Calu3 (cell line): ENCODE measurements at regions of chr12 and their contacts with region 1.

Region 1: GRCh38 chr12:39272871-39273770 is 169.8 kb downstream of the KIF21A start:
- DNase-seq: peak; percentile 52
- H3K4me3 Mint-ChIP-seq: no peak overlapping the region
- H3K27ac Mint-ChIP-seq: no peak overlapping the region
- H3K4me1 Mint-ChIP-seq: no peaks in the 10 kb centered on the region
- H3K27me3 Mint-ChIP-seq: no peaks in the 10 kb centered on the region
- CTCF ChIP-seq: no peak

Region 2: DNA sequence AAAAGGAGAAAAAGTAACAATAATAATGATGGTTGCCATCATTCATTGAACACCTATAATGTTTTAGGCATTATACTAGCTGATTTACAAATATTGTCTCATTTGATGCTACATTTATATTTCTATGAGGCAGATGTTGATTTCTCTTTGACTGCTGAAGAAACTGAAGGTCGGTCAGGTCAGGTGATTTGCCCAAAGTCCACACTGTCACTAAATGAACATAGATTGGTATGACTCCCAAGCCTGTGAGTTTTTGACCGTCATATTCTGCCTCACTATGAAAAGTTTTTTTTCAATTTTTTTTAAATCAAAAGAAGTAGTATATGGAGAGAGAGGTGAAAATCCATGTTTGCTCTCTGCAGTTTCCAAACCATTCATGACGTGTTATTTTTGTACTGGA is 945.8 kb before region 1 on chr12:
- CTCF ChIA-PET with region 1: interaction called, 3 read pairs
- intact Hi-C with region 1: loop called (anchors 2 kb)
- DNase-seq: no peak
- H3K4me3 Mint-ChIP-seq: no peak overlapping the region
- H3K27ac Mint-ChIP-seq: no peak overlapping the region
- H3K4me1 Mint-ChIP-seq: no peaks in the 10 kb centered on the region
- H3K27me3 Mint-ChIP-seq: no peaks in the 10 kb centered on the region
- CTCF ChIP-seq: no peak

Region 3: DNA sequence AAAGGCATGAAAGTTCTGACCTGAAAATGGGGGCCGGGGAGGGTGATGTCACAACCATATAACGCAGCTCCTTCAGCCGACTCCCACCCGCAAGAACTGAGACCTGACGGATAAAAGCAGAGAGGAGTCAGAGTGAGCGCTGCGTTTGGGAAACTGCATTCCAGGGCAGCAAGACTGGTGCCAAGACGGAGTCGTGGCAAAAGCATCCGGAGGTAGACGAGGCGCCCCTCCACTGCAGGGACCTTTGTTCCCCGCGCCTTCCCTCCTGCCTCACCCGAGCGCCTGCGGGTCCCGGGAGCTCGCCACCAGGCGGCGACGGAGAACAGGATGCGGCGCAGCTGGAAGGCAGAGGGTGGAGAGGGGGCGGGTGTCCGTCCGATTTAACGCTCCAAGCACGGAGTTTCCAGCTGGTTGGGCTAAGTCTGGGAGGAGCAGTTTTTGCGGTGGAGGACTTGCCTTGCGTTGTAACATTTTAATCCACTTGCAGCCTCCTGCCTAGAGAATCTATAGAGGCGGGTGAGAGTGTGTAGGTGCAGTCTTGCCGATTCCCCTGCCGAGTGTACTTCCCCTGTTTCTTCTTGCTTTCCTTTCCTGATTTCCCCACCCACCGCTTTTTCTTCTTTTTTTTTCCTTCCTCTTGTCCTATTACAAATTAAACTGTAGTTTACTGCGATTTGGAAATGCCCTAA is 366.5 kb before region 1 on chr12:
- CTCF ChIA-PET with region 1: interaction called, 13 read pairs
- intact Hi-C with region 1: no loop called
- DNase-seq: peak; percentile 88
- H3K4me3 Mint-ChIP-seq: peak overlapping the region; percentile 90
- H3K27ac Mint-ChIP-seq: peak overlapping the region; percentile 72
- H3K4me1 Mint-ChIP-seq: peaks cover 8% of the 10 kb centered on the region
- H3K27me3 Mint-ChIP-seq: no peaks in the 10 kb centered on the region
- CTCF ChIP-seq: peak; percentile 65

Region 4: DNA sequence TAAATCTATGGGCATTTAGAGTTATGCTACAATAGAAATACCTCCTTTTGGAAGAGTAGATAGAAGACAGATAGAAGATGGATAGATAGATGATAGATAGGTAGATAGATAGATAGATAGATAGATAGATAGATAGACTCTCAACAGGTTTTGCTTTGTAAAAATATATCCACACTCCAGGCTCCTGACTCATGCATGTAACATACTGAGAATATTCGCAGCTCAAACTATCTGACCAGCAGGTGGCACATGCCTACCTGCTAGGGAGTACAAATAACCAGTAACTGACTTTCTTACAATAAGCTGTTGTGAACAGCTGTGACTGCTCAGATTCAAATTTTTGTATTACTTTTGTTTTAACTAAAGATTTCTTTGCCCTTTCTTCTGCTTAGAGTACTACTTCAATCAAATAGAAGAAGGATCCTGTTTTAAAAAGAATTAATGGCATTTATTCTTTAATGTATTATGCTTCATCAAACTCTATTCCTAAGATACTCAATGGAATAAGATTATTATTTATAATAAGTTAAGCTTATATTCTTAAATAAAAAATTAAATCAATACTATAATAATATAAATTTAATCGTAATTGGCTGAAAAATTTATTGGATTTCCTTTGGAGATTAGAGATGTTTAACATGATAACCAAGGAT is 352.0 kb before region 1 on chr12:
- CTCF ChIA-PET with region 1: interaction called, 26 read pairs
- intact Hi-C with region 1: loop called (anchors 5 kb)
- DNase-seq: peak; percentile 48
- H3K4me3 Mint-ChIP-seq: no peak overlapping the region
- H3K27ac Mint-ChIP-seq: no peak overlapping the region
- H3K4me1 Mint-ChIP-seq: peaks cover under 1% of the 10 kb centered on the region
- H3K27me3 Mint-ChIP-seq: no peaks in the 10 kb centered on the region
- CTCF ChIP-seq: peak; percentile 37

Region 5: DNA sequence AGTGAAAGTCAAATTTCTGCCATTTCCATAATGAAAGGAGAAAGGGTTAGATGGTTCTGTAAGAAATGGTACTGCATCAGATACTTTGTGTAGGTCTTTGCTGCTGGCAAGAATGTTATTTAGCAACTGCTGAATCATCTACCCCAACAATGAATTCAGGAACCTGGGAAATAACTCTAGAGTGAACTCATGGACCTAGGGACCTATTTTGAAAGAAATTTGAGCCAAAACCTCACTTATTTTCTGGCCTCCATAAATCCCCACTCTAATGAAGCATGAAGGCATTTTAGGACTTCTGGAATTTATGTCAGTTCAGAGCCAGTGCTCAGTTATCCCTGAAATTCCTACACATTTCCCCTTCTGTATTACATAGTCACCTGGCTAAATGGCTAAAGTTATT is 316.8 kb before region 1 on chr12:
- CTCF ChIA-PET with region 1: no interaction called
- intact Hi-C with region 1: no loop called
- DNase-seq: no peak
- H3K4me3 Mint-ChIP-seq: no peak overlapping the region
- H3K27ac Mint-ChIP-seq: no peak overlapping the region
- H3K4me1 Mint-ChIP-seq: no peaks in the 10 kb centered on the region
- H3K27me3 Mint-ChIP-seq: no peaks in the 10 kb centered on the region
- CTCF ChIP-seq: no peak

Region 6: DNA sequence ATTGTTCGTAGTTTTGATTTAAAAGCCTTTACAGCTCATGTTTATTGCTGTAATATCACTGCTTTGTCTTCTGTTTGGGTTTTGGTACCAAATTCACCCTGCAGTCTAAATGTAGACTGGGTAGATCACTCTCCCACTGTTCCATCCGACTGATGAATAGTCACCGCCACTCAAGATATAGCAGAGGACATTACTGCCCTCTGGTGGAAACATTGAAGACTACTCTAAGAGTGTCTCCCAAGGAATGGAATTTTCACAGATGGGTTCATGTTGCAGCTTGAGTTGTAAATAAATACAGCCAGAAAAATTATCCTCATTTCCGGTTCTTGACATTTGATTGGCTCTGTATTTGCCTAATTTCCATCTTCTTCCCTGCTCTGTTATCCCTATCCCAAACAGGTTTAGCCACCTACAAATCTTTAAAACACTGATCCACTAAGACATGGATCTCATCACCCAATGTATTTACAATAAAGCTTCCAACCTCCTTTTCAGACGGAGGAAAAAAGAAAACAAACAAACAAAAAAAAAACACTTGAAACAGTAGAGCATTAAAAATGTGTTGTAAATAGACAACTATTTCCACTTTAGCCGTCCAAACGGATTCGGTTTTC is 169.5 kb before region 1 on chr12:
- CTCF ChIA-PET with region 1: interaction called, 4 read pairs
- intact Hi-C with region 1: loop called (anchors 1 kb)
- DNase-seq: peak; percentile 40
- H3K4me3 Mint-ChIP-seq: no peak overlapping the region
- H3K27ac Mint-ChIP-seq: no peak overlapping the region
- H3K4me1 Mint-ChIP-seq: peaks cover 15% of the 10 kb centered on the region
- H3K27me3 Mint-ChIP-seq: no peaks in the 10 kb centered on the region
- CTCF ChIP-seq: peak; percentile 41

Region 7: DNA sequence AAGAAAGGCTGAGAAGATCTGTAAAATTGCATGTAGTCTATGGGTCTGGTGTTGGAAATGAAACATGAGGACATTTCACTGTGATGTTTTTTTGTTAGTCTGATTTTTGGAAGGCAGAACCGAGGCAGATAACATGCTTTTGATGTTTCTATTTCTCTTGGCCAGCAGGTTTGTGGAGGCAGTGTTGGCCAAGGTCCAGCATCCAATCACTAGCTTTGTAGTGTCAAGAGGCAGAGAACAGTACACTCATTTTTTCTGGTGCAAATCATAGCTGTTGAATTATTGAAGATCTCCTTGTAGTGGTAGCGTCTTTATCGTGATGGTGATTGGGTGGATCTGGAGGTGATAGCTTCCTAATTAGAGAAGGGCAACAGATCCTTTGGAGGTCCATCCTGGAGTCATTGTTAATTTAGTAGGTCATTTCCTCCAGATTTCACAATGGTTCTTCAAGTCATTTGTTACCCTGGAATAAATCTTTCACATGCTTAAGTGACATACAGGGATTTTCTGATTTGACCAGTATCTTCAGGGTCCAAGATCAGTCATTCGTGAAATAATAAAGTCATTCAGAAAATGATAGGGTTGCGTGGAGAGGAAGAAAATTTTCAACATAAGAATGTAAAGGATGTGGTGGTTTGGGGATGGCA is 115.3 kb before region 1 on chr12:
- CTCF ChIA-PET with region 1: no interaction called
- intact Hi-C with region 1: no loop called
- DNase-seq: no peak
- H3K4me3 Mint-ChIP-seq: no peak overlapping the region
- H3K27ac Mint-ChIP-seq: no peak overlapping the region
- H3K4me1 Mint-ChIP-seq: no peaks in the 10 kb centered on the region
- H3K27me3 Mint-ChIP-seq: no peaks in the 10 kb centered on the region
- CTCF ChIP-seq: no peak

Region 8: DNA sequence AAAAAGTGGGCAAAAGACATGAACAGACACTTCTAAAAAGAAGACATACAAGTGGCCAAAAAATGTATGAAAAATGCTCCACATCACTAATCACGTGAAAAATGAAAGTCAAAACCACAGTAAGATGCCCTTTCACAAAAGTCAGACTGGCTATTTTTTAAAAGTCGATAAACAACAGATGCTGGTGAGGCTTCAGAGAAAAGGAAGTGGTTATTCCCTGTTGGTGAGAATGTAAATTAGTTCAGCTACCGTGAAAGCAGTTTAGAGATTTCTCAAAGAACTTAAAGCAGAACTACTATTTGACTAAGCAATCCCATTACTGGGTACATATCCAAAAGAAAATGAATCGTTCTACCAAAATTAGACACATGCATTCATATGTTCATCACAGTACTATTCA is 67.2 kb before region 1 on chr12:
- CTCF ChIA-PET with region 1: no interaction called
- intact Hi-C with region 1: loop called (anchors 10 kb)
- DNase-seq: no peak
- H3K4me3 Mint-ChIP-seq: no peak overlapping the region
- H3K27ac Mint-ChIP-seq: no peak overlapping the region
- H3K4me1 Mint-ChIP-seq: no peaks in the 10 kb centered on the region
- H3K27me3 Mint-ChIP-seq: peaks cover 15% of the 10 kb centered on the region
- CTCF ChIP-seq: no peak